ENCODE measurements at regions of chr12 and their contacts with region 1.

Region 1: DNA sequence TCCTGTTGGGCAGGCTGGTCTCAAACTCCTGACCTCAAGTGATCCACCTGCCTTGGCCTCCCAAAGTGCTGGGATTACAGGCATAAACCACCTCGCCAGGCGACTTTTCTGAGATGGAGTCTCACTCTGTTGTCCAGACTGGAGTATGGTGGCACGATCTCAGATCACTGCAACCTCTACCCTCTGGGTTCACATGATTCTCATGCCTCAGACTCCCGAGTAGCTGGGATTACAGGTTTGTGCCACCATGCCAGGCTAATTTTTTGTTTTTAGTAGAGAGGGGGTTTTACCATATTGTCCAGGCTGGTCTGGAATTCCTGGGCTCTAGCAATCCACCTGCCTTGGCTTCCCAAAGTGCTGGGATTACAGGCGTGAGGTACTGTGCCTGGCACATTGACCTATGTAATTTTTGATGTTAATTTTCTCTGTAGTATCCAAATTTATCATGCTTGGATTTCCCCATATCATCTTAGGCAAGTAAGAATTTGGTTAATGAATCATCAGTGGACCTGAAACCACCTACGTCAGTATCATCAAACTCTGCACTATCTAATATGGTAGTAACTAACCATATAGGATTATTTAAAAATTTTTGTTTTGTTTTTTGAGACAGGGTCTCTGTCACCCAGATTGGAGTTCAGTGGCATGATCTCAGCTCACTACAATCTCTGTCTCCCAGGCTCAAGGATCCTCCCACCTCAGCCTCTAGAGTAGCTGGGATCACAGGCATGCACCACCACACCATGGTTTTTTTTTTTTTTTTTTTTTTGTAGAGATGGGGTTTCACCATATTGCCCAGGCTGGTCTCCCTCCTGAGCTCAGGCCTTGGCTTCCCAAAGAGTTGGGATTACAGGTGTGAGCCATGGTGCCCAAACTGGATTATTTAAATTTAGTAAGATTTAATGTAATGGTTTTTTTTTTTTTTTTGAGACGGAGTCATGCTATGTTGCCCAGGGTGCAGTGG is 11.9 kb upstream of the ATP5F1B start:
- DNase-seq: peak; percentile 39
- CTCF ChIP-seq: no peak

Region 2: GRCh38 chr12:56630160-56630632 is 27.5 kb before region 1 on chr12 and contains the start of gene BAZ2A:
- CTCF ChIA-PET with region 1: no interaction called
- POLR2A ChIA-PET with region 1: no interaction called
- DNase-seq: peak; percentile 90
- CTCF ChIP-seq: no peak

Region 3: DNA sequence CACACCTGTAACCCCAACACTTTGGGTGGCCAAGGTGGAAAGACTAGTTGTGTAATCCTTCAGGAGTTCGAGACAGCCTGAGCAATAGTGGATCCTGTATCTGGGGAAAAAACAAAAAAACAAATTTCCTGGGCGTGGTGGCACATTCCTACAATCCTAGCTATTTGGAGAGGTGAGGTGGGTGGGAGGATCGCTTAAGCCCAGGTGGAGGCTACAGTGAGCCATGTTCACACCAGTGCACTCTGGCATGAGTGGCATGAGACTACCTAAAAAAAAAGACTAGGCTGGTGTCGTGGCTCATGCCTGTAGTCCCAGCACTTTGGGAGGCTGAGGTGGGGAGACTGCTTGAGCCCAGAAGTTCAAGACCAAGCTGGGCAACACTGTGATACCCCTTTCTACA is 13.1 kb after region 1 on chr12:
- CTCF ChIA-PET with region 1: interaction called, 13 read pairs
- POLR2A ChIA-PET with region 1: interaction called, 8 read pairs
- DNase-seq: no peak
- CTCF ChIP-seq: no peak

Measured in GM10248 (cell line).